H1 (cell line): ENCODE measurements at regions of chr2 and their contacts with region 1.

Region 1: GRCh38 chr2:60453301-60453700 is 100.2 kb downstream of the BCL11A start:
- DNase-seq: peak; percentile 62 to 90
- H3K4me3 ChIP-seq: peak overlapping the region in 1 of 4 experiments; percentile 37; a peak in 1 of 8 replicates
- H3K27ac ChIP-seq: peak overlapping the region; percentile 11; the same call in 1 of the 2 replicates
- H3K4me1 ChIP-seq: peaks cover 5 to 28% (median 19%) of the 10 kb centered on the region in 4 experiments
- H3K27me3 ChIP-seq: no peaks in the 10 kb centered on the region
- CTCF ChIP-seq: no peak
- EP300 ChIP-seq: peak in 1 of 2 experiments; percentile 72; a peak in 1 of 3 replicates
- POLR2A ChIP-seq: peak in 1 of 2 experiments; percentile 63; a peak in 2 of 3 replicates
- RAD21 ChIP-seq: peak; percentile 8 to 19; a peak in 3 of 4 replicates

Region 2: DNA sequence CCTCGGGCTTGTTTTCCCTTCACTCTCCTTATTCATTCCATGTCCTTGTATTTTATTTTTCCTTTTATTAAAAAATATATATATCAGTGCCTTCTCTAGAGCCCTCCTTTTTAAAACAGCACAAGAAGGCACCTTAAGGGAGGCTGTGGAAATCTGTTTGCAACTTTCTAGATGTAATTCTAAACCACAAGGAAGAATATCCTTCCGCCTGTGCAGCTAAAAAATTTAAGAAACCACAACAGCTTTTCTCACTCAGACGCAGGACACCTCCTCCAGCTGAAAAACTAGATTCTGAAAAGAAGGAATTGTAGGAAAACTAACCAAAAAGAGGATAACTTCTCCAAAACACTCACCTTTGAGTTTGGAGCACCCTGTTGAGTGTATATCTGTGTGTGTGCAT is 42.0 kb before region 1 on chr2:
- CTCF ChIA-PET with region 1: no interaction called
- POLR2A ChIA-PET with region 1: no interaction called
- DNase-seq: no peak
- H3K4me3 ChIP-seq: no peak overlapping the region
- H3K27ac ChIP-seq: no peak overlapping the region
- H3K4me1 ChIP-seq: peaks cover 4 to 22% (median 9%) of the 10 kb centered on the region in 4 experiments
- H3K27me3 ChIP-seq: no peaks in the 10 kb centered on the region
- CTCF ChIP-seq: no peak
- EP300 ChIP-seq: no peak
- POLR2A ChIP-seq: no peak
- RAD21 ChIP-seq: no peak

Region 3: DNA sequence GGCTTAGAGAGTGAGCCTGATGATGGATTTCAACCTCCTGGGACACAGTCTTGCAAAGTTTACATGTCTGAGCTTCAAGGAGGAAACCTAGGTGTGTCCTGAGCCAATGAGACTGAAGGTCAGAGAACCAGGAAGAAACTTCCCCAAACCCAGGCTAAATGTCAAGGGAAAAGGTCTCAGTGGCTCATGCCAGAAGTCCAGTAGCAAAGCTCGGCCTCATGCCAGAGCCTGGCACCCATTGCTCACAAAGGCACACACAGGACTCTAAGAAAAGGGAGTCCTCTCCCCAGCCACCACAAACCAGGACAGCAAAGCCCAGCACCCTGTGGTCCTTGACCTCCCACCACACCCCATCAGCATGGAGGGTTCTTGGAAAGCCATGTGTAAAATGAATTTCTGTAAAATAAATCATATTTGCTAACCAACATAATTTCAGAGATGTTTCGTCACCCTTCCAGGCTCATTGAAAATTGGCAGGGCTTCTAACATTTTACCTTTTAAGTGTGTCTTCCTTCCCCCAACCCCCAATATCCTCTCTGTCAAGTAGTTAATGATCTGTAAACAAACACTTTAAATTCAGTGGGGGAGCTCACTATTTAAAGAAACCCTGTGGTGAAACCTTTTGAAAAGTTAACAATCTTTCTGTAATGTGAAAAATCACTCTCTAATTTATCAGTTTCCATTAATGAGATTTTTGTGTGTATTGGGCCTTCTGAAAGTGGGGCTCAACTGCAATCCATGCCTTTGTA is 23.1 kb after region 1 on chr2:
- CTCF ChIA-PET with region 1: interaction called, 4 read pairs
- POLR2A ChIA-PET with region 1: interaction called, 10 read pairs
- DNase-seq: no peak
- H3K4me3 ChIP-seq: peak overlapping the region in 1 of 4 experiments; percentile 20; a peak in 1 of 8 replicates
- H3K27ac ChIP-seq: no peak overlapping the region
- H3K4me1 ChIP-seq: peaks cover 22 to 52% (median 45%) of the 10 kb centered on the region in 4 experiments
- H3K27me3 ChIP-seq: peaks cover 0 to 2% (median under 1%) of the 10 kb centered on the region in 4 experiments; a peak in 4 of 7 replicates
- CTCF ChIP-seq: no peak
- EP300 ChIP-seq: no peak
- POLR2A ChIP-seq: no peak
- RAD21 ChIP-seq: no peak